RWPE1 (cell line): ENCODE measurements at regions of chr4 and their contacts with region 1.

Region 1: GRCh38 chr4:77862478-77863216 is at the start of gene MRPL1:
- DNase-seq: peak; percentile 89
- H3K27ac ChIP-seq: peak within 1 kb of the TSS; percentile 85
- CTCF ChIP-seq: no peak

Region 2: DNA sequence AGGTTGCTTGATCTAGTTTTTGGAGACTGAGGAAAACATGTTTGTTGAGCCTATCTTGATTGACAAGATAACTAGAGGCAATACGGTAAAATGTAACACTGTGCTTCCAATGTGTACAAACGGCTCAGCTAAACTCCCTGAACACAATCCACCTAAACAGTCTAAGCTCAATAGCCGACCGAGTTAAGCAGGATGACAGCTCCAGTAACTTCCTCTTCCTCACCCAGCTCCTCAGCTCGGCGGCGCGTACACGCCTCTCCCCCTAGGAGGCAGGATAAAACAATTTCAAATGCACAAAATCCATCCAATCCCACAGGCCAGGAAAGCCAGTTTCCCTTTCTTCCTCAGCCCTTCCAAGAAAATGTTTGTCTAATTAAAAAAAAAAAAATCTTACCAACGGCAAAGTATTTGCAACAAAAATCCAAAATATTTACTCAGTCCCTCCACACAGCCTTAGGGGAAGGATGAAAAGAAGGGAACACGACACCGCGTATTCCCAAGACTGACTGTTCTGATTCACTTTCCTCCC is 44.5 kb before region 1 on chr4:
- CTCF ChIA-PET with region 1: interaction called, 6 read pairs
- POLR2A ChIA-PET with region 1: interaction called, 10 read pairs
- DNase-seq: peak; percentile 83
- H3K27ac ChIP-seq: peak overlapping the region; percentile 95
- CTCF ChIP-seq: peak; percentile 71

Region 3: GRCh38 chr4:77843628-77844027 is 19.0 kb before region 1 on chr4:
- CTCF ChIA-PET with region 1: no interaction called
- POLR2A ChIA-PET with region 1: interaction called, 12 read pairs
- DNase-seq: no peak
- H3K27ac ChIP-seq: no peak overlapping the region
- CTCF ChIP-seq: no peak